ENCODE measurements at regions of chr15 and their contacts with region 1.

Region 1: GRCh38 chr15:70853821-70854666 is at the start of gene LARP6:
- DNase-seq: peak; percentile 96
- H3K4me3 ChIP-seq: peak within 1 kb of the TSS; percentile 81 to 86
- H3K27ac ChIP-seq: peak within 1 kb of the TSS; percentile 86 to 97
- H3K4me1 ChIP-seq: peaks cover 16 to 24% of the 10 kb centered on the region in 2 experiments
- H3K27me3 ChIP-seq: no peaks in the 10 kb centered on the region
- CTCF ChIP-seq: no peak
- EP300 ChIP-seq: peak in 1 of 2 experiments; percentile 55; a peak in 1 of 4 replicates
- RAD21 ChIP-seq: no peak
- polyA plus RNA-seq, gene LARP6: 193 and 236 TPM in 2 replicates

Region 2: GRCh38 chr15:70870051-70870450 is 16.0 kb after region 1 on chr15:
- CTCF ChIA-PET with region 1: interaction called, 25 read pairs
- POLR2A ChIA-PET with region 1: interaction called, 21 read pairs
- DNase-seq: peak; percentile 47
- H3K4me3 ChIP-seq: peak overlapping the region in 1 of 2 experiments; percentile 26; a peak in 1 of 4 replicates
- H3K27ac ChIP-seq: peak overlapping the region; percentile 83 to 87
- H3K4me1 ChIP-seq: peaks cover 31 to 35% of the 10 kb centered on the region in 2 experiments
- H3K27me3 ChIP-seq: no peaks in the 10 kb centered on the region
- CTCF ChIP-seq: no peak
- EP300 ChIP-seq: peak; percentile 55 to 81; a peak in 3 of 4 replicates
- RAD21 ChIP-seq: no peak

Measured in SK-N-SH (cell line).